CD14-positive monocyte (primary cell): ENCODE measurements at regions of chr5 and their contacts with region 1.

Region 1: GRCh38 chr5:14270209-14270702 is 127.1 kb downstream of the TRIO start:
- DNase-seq: peak; percentile 25 to 58 (median 50)
- H3K4me3 ChIP-seq: no peak overlapping the region
- H3K4me3 Mint-ChIP-seq: no peak overlapping the region
- H3K27ac ChIP-seq: no peak overlapping the region
- H3K27ac Mint-ChIP-seq: no peak overlapping the region
- H3K4me1 ChIP-seq: peaks cover 14 to 19% of the 10 kb centered on the region in 2 donors
- H3K4me1 Mint-ChIP-seq: peaks cover 22% of the 10 kb centered on the region
- H3K27me3 ChIP-seq: no peaks in the 10 kb centered on the region
- H3K27me3 Mint-ChIP-seq: peaks cover 0 to 2% (median 1%) of the 10 kb centered on the region in 3 donors
- CTCF ChIP-seq: peak; percentile 85

Region 2: GRCh38 chr5:13987843-13988464 is 282.3 kb before region 1 on chr5:
- intact Hi-C with region 1: loop called in 1 of 2 experiments (anchors 5 kb)
- DNase-seq: peak; percentile 7 to 25 (median 15)
- H3K4me3 ChIP-seq: no peak overlapping the region
- H3K4me3 Mint-ChIP-seq: peak overlapping the region in 1 of 2 donors; percentile 11
- H3K27ac ChIP-seq: no peak overlapping the region
- H3K27ac Mint-ChIP-seq: no peak overlapping the region
- H3K4me1 ChIP-seq: no peaks in the 10 kb centered on the region
- H3K4me1 Mint-ChIP-seq: peaks cover 1% of the 10 kb centered on the region
- H3K27me3 ChIP-seq: no peaks in the 10 kb centered on the region
- H3K27me3 Mint-ChIP-seq: peaks cover 2 to 14% (median 2%) of the 10 kb centered on the region in 3 donors
- CTCF ChIP-seq: peak; percentile 87

Region 3: GRCh38 chr5:14108170-14108996 is 161.9 kb before region 1 on chr5:
- intact Hi-C with region 1: loop called in 1 of 2 experiments (anchors 5 kb)
- DNase-seq: peak; percentile 53 to 74 (median 73)
- H3K4me3 ChIP-seq: peak overlapping the region in 2 of 3 experiments; percentile 15 to 36
- H3K4me3 Mint-ChIP-seq: peak overlapping the region; percentile 57 to 89
- H3K27ac ChIP-seq: no peak overlapping the region
- H3K27ac Mint-ChIP-seq: peak overlapping the region in 1 of 7 donors; percentile 2
- H3K4me1 ChIP-seq: peaks cover 15 to 25% of the 10 kb centered on the region in 2 donors
- H3K4me1 Mint-ChIP-seq: peaks cover 25% of the 10 kb centered on the region
- H3K27me3 ChIP-seq: no peaks in the 10 kb centered on the region
- H3K27me3 Mint-ChIP-seq: peaks cover 0 to 7% (median 7%) of the 10 kb centered on the region in 3 donors
- CTCF ChIP-seq: peak; percentile 71

Region 4: DNA sequence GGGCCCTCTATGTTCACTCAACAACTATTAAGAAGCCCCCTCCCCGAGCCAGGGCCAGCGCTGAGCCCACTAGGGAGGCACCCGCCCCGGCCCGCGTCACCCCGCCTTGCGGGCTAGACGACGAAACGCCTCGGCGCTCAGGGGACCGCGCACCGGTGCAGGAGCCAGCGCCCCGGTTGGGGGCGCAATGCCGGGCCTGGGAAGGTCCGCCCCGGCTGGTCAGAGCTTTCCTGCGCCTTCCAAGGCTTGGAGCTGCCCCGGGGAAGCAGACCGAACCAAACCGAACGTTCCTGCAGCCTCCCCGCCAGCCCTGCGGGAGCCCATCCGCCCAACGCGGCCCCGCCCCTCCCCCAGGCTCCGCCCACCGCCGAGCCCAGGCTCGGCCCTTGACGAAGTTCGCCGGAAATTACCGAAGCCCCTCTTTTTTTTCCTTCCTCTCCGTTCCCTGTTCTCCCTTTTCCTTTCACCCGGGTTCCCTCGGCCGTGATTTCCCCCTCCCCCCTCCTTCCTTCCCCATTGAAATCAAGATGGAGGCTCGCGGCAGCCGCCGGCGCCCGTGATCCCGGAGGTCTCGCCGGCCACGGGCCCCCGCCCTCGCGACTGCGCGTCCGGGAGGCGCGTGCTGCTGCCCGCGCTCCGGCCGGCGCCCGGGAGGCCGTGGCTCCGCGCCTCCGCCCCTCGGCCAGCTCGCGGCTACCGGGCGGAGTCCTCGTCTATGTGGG is 127.3 kb before region 1 on chr5 and contains the start of gene TRIO:
- intact Hi-C with region 1: loop called in 1 of 2 experiments (anchors 2 kb)
- DNase-seq: peak; percentile 71 to 75 (median 71)
- H3K4me3 ChIP-seq: peak within 1 kb of the TSS; percentile 75 to 91 (median 86)
- H3K4me3 Mint-ChIP-seq: peak within 1 kb of the TSS; percentile 91 to 92
- H3K27ac ChIP-seq: peak within 1 kb of the TSS; percentile 54 to 85
- H3K27ac Mint-ChIP-seq: peak within 1 kb of the TSS; percentile 69 to 95 (median 92)
- H3K4me1 ChIP-seq: peaks cover 19 to 32% of the 10 kb centered on the region in 2 donors
- H3K4me1 Mint-ChIP-seq: peaks cover 27% of the 10 kb centered on the region
- H3K27me3 ChIP-seq: peaks cover 0 to 6% of the 10 kb centered on the region in 2 donors
- H3K27me3 Mint-ChIP-seq: peaks cover 4 to 15% (median 9%) of the 10 kb centered on the region in 3 donors
- CTCF ChIP-seq: peak; percentile 45
- polyA plus RNA-seq, gene TRIO: 1.7 to 45.8 (median 2.1) TPM

Region 5: DNA sequence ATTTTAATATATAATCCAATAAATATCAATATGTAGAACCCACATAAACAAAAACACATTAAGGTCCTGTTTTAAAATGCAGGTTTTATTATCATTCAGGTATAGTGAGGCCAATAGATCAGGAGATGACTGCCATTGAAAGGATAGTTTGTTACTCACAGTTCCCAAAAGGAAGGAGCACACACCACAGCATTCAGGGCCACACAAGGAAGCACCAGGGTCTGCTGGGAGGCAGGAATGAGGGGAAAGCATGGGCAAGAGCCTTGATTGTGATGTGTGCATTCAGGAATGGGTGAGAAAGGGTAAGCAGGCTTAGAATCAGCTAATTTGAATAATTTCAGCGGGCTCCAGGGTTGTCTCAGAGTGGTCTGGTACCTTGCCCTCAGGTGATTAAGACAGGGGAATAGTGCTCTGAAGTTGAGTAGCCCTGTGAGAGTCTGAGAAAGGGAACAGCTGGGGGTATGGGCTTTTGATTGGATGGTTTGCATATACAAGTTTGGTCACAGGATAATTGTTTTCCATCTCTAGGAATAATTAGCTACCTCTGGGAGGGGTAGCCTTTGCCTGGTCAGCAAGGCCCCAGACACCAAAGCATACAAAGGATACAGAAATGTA is 374.5 kb after region 1 on chr5:
- intact Hi-C with region 1: no loop called
- DNase-seq: no peak
- H3K4me3 ChIP-seq: no peak overlapping the region
- H3K4me3 Mint-ChIP-seq: no peak overlapping the region
- H3K27ac ChIP-seq: no peak overlapping the region
- H3K27ac Mint-ChIP-seq: no peak overlapping the region
- H3K4me1 ChIP-seq: peaks cover 0 to 3% of the 10 kb centered on the region in 2 donors
- H3K4me1 Mint-ChIP-seq: no peaks in the 10 kb centered on the region
- H3K27me3 ChIP-seq: no peaks in the 10 kb centered on the region
- H3K27me3 Mint-ChIP-seq: peaks cover 1 to 5% (median 4%) of the 10 kb centered on the region in 3 donors
- CTCF ChIP-seq: no peak